B cell (primary cell): ENCODE measurements at regions of chr7 and their contacts with region 1.

Region 1: DNA sequence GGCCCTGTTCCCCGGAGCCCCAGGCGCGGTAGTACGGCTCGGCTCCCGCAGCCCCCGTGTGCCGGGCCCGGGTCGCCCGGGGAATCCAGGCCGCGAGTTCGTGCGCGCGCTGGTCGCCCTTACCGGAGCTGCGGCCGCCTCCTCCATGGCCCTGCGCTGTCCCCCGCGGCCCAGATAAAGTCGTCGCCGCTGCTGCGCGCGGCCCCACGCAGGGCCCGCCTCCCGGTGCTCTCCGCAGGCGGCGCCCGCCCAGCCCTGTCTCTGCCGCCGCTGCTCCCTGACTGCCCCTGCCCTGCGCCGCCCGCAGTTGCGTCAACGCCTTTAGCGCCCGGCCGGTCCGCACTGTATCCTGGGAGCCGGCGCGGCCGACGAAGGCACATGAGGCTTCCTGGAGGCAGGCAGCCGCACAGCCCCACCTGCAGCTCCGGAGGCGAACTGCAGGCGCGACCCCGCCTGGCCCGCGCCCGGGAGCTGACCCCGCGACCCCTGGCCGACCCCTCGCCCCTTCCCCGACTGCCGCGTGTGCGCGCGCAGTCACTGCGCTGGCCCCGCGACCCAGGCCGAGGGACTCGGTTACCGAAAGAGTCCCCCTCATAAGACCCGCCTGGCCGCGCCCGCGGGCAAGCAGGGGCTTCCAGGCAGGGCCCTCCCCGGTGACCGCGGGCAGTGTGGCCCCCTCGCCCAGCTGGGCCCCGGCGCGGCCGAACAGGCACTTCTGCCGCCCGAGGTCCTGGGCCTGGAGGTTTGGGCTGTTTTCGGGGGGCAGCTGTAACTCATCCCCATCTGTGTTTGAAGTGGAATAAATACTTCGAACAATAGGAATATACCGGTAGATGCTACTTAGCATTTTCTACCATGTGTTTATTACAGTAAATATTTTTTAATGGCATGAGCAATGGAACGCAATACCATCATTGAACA is 127.1 kb upstream of the ZNF746 start:
- DNase-seq: peak; percentile 94
- ATAC-seq: peak; percentile 90
- H3K4me3 ChIP-seq: peak overlapping the region; percentile 38 to 81 (median 76)
- H3K4me3 Mint-ChIP-seq: peak overlapping the region; percentile 95
- H3K27ac ChIP-seq: peak overlapping the region; percentile 48 to 78
- H3K27ac Mint-ChIP-seq: peak overlapping the region; percentile 93
- H3K4me1 ChIP-seq: peaks cover 25 to 33% of the 10 kb centered on the region in 2 donors
- H3K4me1 Mint-ChIP-seq: peaks cover 39% of the 10 kb centered on the region
- H3K27me3 ChIP-seq: peaks cover 0 to 3% (median 0%) of the 10 kb centered on the region in 4 experiments
- H3K27me3 Mint-ChIP-seq: peaks cover 9% of the 10 kb centered on the region
- CTCF ChIP-seq: peak; percentile 93

Region 2: DNA sequence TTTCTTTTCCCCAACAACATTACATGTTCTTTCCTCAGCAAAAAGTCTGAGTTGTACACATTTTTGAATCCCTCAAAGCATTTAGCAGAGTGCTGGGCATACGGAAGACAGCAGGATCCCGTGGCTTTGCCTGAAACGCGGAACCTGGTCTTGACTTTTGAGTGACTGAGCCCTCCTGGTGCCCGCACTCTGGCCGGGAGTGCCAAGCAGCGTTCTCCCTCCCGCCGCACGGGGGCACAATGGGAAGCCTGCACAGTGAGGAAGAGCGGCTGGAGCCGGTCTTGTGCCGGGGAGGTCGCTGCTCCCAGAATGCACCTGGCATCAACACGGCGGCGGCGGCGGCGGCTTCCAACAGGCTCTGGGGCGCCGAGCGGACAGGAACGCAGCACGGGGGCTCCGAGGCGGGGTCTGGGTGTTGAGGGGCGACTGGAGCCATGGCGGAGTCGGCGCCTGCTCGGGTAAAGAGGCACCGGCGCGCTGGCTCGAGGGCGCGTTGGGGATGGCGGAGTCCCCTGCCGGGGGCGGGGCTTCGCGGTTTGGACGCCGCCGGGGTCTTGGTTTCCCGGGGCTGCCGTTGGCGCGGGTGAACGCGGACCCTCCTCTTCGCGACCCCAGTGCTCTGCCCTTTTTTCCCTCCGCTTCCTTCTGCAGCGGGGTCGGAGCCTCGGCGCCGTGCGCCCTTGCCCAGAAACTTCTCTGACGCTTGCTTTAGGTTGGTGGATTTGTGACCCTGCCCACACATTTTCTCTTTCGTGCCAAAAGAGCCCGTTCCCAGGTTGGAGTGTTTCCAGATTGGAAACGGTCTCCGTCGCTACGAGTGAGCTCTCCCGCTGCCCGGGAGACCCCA is 385.1 kb before region 1 on chr7 and contains the start of gene ZNF212:
- CTCF ChIA-PET with region 1: no interaction called
- POLR2A ChIA-PET with region 1: no interaction called
- intact Hi-C with region 1: loop called (anchors 1 kb)
- DNase-seq: peak; percentile 91
- ATAC-seq: peak; percentile 100
- H3K4me3 ChIP-seq: peak within 1 kb of the TSS; percentile 75 to 94 (median 84)
- H3K4me3 Mint-ChIP-seq: peak within 1 kb of the TSS; percentile 95
- H3K27ac ChIP-seq: peak within 1 kb of the TSS; percentile 33 to 73
- H3K27ac Mint-ChIP-seq: peak within 1 kb of the TSS; percentile 93
- H3K4me1 ChIP-seq: peaks cover 17 to 25% of the 10 kb centered on the region in 2 donors
- H3K4me1 Mint-ChIP-seq: peaks cover 28% of the 10 kb centered on the region
- H3K27me3 ChIP-seq: peaks cover 0 to 5% (median 0%) of the 10 kb centered on the region in 4 experiments
- H3K27me3 Mint-ChIP-seq: peaks cover 3% of the 10 kb centered on the region
- CTCF ChIP-seq: peak; percentile 84
- total RNA-seq, gene ZNF212: 22.5 and 25.7 TPM in 2 replicates

Region 3: DNA sequence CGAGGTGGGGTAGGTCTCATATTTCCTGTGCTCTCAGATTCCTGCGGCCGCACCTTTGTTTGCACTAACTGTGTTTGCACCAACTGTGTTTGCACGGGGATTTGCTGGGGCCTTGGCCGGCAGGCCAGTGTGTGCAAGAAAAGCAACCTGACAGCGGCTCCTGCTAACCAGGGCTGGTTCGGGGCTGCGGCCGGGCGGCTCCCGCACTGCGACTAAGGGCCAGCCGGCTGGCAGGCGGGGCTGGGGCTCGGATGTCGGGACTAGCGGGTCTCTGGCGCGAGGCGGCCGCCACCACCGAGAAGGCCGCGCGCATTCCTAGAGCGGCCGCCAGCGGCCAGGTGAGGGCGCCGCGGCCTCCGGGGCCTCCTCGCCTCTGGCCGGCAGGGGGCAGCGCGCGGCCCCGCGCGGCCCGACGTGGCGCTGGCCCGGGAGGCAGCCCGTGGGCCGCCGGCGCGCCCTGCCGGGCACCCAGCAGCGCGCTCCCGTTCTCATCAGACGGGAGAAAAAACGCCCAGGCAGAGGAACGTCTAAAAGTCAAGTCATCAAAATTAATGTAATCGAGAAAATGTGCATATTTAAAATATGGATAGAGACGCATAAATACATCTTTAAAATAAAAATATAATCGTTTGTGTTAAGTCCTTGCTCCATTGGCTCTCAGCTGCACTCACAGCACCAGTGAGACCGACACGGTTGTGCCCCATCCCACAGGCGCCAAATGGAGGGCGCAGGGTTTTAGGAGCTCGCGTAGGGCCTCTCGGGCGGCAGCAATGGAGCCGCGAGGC is 202.4 kb before region 1 on chr7:
- CTCF ChIA-PET with region 1: interaction called, 21 read pairs
- POLR2A ChIA-PET with region 1: no interaction called
- intact Hi-C with region 1: loop called (anchors 1 kb)
- DNase-seq: peak; percentile 89
- ATAC-seq: peak; percentile 98
- H3K4me3 ChIP-seq: peak overlapping the region; percentile 58 to 71 (median 60)
- H3K4me3 Mint-ChIP-seq: peak overlapping the region; percentile 83
- H3K27ac ChIP-seq: peak overlapping the region; percentile 20 to 73
- H3K27ac Mint-ChIP-seq: peak overlapping the region; percentile 81
- H3K4me1 ChIP-seq: peaks cover 10 to 12% of the 10 kb centered on the region in 2 donors
- H3K4me1 Mint-ChIP-seq: peaks cover 8% of the 10 kb centered on the region
- H3K27me3 ChIP-seq: no peaks in the 10 kb centered on the region
- H3K27me3 Mint-ChIP-seq: no peaks in the 10 kb centered on the region
- CTCF ChIP-seq: peak; percentile 63

Region 4: DNA sequence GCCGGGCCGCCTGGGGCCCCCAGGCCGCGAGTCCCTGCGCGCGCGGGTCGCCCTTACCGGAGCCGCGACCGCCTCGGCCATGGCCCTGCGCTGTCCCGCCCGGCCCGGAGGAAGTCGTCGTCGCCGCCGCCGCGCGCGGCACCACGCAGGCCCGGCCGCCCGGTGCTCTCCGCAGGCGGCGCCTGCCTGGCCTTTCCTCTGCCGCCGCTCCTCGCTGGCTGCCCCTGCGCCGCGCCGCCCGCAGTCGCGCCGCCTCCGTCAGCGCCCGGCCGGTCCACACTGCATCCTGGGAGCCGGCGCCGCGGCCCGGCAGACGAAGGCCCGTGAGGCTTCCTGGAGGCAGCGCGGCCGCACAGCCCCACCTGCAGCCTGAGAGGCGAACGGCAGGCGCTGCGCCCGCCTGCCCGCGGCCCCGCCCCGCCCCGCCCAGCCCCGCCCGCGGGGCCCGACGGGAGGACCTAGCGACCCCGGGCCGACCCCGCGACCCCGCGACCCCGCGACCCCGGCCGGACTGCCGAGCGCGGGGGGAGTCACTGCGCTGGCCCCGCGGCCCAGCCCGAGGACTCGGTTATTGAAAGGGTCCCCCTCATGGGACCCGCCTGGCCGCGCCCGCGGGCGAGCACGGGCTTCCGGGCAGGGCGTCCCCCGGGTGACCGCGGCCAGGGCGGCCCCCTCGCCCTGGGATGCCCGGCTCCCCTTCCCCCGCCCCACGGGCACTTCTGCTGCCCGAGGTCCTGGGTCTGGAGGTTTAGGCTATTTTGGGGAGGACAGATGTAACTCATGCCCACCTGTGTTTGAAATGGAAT is 127.0 kb before region 1 on chr7 and contains the start of gene ZNF746:
- CTCF ChIA-PET with region 1: interaction called, 5 read pairs
- POLR2A ChIA-PET with region 1: no interaction called
- intact Hi-C with region 1: loop called (anchors 1 kb)
- DNase-seq: peak; percentile 89
- ATAC-seq: peak; percentile 96
- H3K4me3 ChIP-seq: peak within 1 kb of the TSS; percentile 27 to 87 (median 60)
- H3K4me3 Mint-ChIP-seq: peak within 1 kb of the TSS; percentile 93
- H3K27ac ChIP-seq: peak within 1 kb of the TSS in 1 of 2 donors; percentile 78
- H3K27ac Mint-ChIP-seq: peak within 1 kb of the TSS; percentile 92
- H3K4me1 ChIP-seq: peaks cover 12 to 19% of the 10 kb centered on the region in 2 donors
- H3K4me1 Mint-ChIP-seq: peaks cover 23% of the 10 kb centered on the region
- H3K27me3 ChIP-seq: no peaks in the 10 kb centered on the region
- H3K27me3 Mint-ChIP-seq: no peaks in the 10 kb centered on the region
- CTCF ChIP-seq: peak; percentile 43
- total RNA-seq, gene ZNF746: 30.4 and 32.2 TPM in 2 replicates

Region 5: GRCh38 chr7:149662591-149663095 is 38.0 kb after region 1 on chr7:
- CTCF ChIA-PET with region 1: no interaction called
- POLR2A ChIA-PET with region 1: no interaction called
- intact Hi-C with region 1: no loop called
- DNase-seq: peak; percentile 49
- ATAC-seq: peak; percentile 62
- H3K4me3 ChIP-seq: no peak overlapping the region
- H3K4me3 Mint-ChIP-seq: no peak overlapping the region
- H3K27ac ChIP-seq: no peak overlapping the region
- H3K27ac Mint-ChIP-seq: no peak overlapping the region
- H3K4me1 ChIP-seq: no peaks in the 10 kb centered on the region
- H3K4me1 Mint-ChIP-seq: no peaks in the 10 kb centered on the region
- H3K27me3 ChIP-seq: peaks cover 0 to 13% (median 0%) of the 10 kb centered on the region in 4 experiments
- H3K27me3 Mint-ChIP-seq: peaks cover 69% of the 10 kb centered on the region
- CTCF ChIP-seq: peak; percentile 47

Region 6: GRCh38 chr7:149714050-149714909 is 89.6 kb after region 1 on chr7:
- CTCF ChIA-PET with region 1: no interaction called
- POLR2A ChIA-PET with region 1: no interaction called
- intact Hi-C with region 1: loop called (anchors 1 kb)
- DNase-seq: peak; percentile 94
- ATAC-seq: peak; percentile 93
- H3K4me3 ChIP-seq: peak overlapping the region in 4 of 5 experiments; percentile 62 to 83 (median 68)
- H3K4me3 Mint-ChIP-seq: peak overlapping the region; percentile 87
- H3K27ac ChIP-seq: no peak overlapping the region
- H3K27ac Mint-ChIP-seq: peak overlapping the region; percentile 78
- H3K4me1 ChIP-seq: peaks cover 10 to 21% of the 10 kb centered on the region in 2 donors
- H3K4me1 Mint-ChIP-seq: peaks cover 22% of the 10 kb centered on the region
- H3K27me3 ChIP-seq: no peaks in the 10 kb centered on the region
- H3K27me3 Mint-ChIP-seq: no peaks in the 10 kb centered on the region
- CTCF ChIP-seq: no peak